Dorsolateral prefrontal cortex (tissue), 120 donors: ENCODE measurements at regions of chr14 and their contacts with region 1.

Region 1: DNA sequence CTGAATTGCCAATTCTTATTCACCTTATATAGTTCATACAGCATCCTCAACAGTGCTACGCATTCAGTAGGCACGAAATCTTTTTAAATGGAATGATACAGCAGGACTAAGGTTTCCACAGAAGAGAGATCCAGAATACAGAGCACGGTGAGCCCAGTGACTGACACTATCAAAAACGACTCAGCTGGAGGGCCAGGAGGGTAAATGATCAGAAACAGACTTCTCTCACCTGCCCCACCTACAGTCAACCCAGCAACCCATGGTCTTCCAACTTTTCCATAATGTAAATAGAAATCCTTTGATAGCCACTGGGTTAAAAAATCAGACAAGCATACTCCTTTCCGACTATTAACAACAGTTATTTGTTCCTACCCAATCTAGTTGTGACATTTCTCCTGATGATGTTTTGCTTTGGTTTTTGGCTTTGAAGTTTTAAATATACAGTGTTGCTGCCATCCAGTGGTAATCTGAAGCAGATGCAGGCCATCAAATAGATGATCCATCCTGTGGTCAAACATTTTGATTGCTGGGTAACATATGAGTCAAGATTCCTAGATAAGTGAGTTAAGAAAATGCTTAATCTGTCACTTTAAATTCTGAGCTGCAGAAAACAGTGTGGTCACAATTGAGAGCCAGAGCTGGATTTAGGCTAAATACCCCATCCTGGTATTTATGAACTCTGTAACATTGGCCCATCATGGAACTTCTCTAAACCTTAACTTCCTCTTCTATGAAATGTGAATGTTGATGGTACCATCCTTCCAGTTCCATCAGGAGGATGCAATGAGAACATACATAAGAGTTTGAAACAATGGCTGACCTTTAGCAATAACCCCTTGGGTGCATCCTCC is 42.0 kb downstream of the GPHB5 start:
- DNase-seq: no peak
- H3K4me3 ChIP-seq: no peak overlapping the region
- H3K27ac ChIP-seq: peak overlapping the region in 1 of 59 donors; percentile 37
- H3K27me3 ChIP-seq: no peaks in the 10 kb centered on the region
- CTCF ChIP-seq: peak; percentile 72 to 94 (median 86)

Region 2: GRCh38 chr14:62162998-62163589 is 1113.6 kb before region 1 on chr14:
- intact Hi-C with region 1: loop called in 1 of 2 experiments (anchors 2 kb)
- DNase-seq: peak in 1 of 10 donors; percentile 20
- H3K4me3 ChIP-seq: no peak overlapping the region
- H3K27ac ChIP-seq: no peak overlapping the region
- H3K27me3 ChIP-seq: peaks cover 0 to 19% (median 0%) of the 10 kb centered on the region in 45 donors
- CTCF ChIP-seq: peak; percentile 23 to 86 (median 69)

Region 3: GRCh38 chr14:62179367-62180018 is 1097.2 kb before region 1 on chr14:
- intact Hi-C with region 1: loop called (anchors 5 kb)
- DNase-seq: peak in 9 of 10 donors; percentile 19 to 85 (median 60)
- H3K4me3 ChIP-seq: no peak overlapping the region
- H3K27ac ChIP-seq: no peak overlapping the region
- H3K27me3 ChIP-seq: peaks cover 0 to 4% (median 0%) of the 10 kb centered on the region in 45 donors
- CTCF ChIP-seq: peak; percentile 26 to 77 (median 62)

Region 4: DNA sequence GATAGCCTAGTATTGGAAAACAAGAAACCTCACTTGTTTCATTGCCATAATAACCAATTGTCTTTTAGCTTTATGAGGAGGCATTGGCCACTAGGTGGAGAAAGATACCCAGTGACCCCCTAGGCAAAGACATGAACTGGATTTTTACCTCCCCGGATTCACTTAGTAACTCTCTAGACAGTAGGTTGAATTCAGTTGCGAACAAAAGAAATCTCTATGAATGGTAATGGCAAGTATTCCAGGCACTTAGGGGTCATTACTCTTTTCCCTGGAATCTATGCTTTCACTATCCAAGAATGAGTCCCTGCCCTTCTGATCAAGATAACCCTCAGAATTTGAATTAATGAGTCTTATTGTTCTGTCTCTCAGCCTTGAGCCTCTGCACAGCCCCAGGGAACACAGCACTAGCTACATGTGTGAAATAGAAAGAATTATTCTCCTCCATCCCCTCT is 101.9 kb before region 1 on chr14:
- intact Hi-C with region 1: loop called (anchors 5 kb)
- DNase-seq: peak in 1 of 10 donors; percentile 9
- H3K4me3 ChIP-seq: peak overlapping the region in 2 of 59 donors; percentile 10 to 12
- H3K27ac ChIP-seq: no peak overlapping the region
- H3K27me3 ChIP-seq: peaks cover 0 to 3% (median 0%) of the 10 kb centered on the region in 45 donors
- CTCF ChIP-seq: peak; percentile 45 to 79 (median 60)

Region 5: DNA sequence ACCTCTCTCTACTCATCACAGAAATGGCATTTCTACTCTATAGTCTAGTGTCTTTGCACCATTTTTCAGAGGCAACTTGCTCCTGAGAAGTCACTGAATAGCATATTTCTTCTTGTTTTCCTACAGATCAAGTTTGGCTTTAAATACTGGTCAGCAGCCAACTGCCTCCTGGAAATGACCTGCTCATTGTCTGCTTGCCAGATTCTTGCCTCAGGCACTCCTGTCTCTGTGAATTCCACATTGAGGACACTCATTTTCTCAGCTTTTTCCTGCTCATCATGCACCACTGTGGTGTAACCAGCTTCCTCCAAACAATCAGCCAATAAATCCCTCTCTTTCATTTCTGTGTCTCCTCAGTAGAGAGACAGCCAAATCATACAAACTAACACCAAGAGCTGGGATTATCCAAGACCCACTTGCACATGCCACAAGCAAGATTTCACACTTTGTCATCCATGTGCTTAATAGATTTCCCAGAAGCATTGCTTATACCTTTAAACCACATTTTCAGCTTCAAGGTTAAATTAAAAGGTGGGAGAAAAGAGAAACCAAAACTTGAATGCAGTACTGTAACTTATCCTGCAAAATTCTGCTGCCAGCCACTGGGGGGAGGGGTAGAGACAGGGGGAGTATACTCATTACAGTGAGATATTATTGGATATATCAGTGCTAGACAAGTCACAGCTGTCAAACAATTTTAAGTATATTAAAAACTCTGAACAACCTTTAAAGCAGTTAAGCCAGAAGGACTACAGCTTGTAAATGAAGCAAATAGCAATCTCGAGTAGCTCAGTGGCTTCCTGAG is 161.4 kb after region 1 on chr14:
- intact Hi-C with region 1: no loop called
- DNase-seq: peak in 1 of 10 donors; percentile 70
- H3K4me3 ChIP-seq: peak overlapping the region in 18 of 59 donors; percentile 1 to 47 (median 21)
- H3K27ac ChIP-seq: peak overlapping the region in 52 of 59 donors; percentile 5 to 82 (median 56)
- H3K27me3 ChIP-seq: no peaks in the 10 kb centered on the region
- CTCF ChIP-seq: peak in 18 of 56 donors; percentile 10 to 44 (median 24)

Region 6: GRCh38 chr14:63642229-63642611 is 365.5 kb after region 1 on chr14:
- intact Hi-C with region 1: no loop called
- DNase-seq: peak; percentile 40 to 93 (median 85)
- H3K4me3 ChIP-seq: peak overlapping the region; percentile 57 to 98 (median 87)
- H3K27ac ChIP-seq: peak overlapping the region; percentile 76 to 100 (median 96)
- H3K27me3 ChIP-seq: no peaks in the 10 kb centered on the region
- CTCF ChIP-seq: peak in 5 of 56 donors; percentile 3 to 28 (median 12)